ENCODE measurements at regions of chr6 and their contacts with region 1.

Region 1: GRCh38 chr6:111804627-111805235 is 68.5 kb downstream of the FYN start:
- DNase-seq: peak; percentile 70 to 90 (median 74)
- H3K4me3 ChIP-seq: peak overlapping the region in 1 of 2 donors; percentile 15
- H3K4me3 Mint-ChIP-seq: peak overlapping the region; percentile 34 to 86 (median 72)
- H3K27ac ChIP-seq: peak overlapping the region; percentile 77
- H3K27ac Mint-ChIP-seq: peak overlapping the region; percentile 94 to 99 (median 96)
- H3K4me1 ChIP-seq: peaks cover 98% of the 10 kb centered on the region
- H3K4me1 Mint-ChIP-seq: peaks cover 64 to 98% (median 84%) of the 10 kb centered on the region in 4 donors
- H3K27me3 ChIP-seq: no peaks in the 10 kb centered on the region
- H3K27me3 Mint-ChIP-seq: no peaks in the 10 kb centered on the region

Region 2: DNA sequence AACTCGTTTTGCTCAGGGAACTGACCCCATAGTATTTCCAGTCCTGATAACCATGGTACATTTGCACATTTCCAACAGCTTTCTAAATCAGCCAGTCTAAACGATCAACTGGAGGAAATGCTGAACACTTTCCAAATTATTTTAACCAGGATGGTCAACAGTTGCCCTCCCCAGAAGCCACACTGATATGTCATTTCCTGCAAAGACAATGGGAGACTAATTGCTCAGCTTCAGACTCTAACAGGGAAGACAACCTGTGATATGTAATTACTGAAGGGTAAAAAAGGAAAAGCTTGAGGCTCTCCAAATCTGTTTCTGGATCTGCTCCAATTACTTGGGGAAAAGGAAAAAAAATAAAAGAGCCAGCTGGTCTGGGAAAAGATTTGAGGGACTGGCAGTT is 20.3 kb before region 1 on chr6:
- CTCF ChIA-PET with region 1: interaction called, 12 read pairs
- POLR2A ChIA-PET with region 1: interaction called, 6 read pairs
- intact Hi-C with region 1: no loop called
- DNase-seq: no peak
- H3K4me3 ChIP-seq: no peak overlapping the region
- H3K4me3 Mint-ChIP-seq: peak overlapping the region in 3 of 8 donors; percentile 6 to 14 (median 12)
- H3K27ac ChIP-seq: peak overlapping the region; percentile 7
- H3K27ac Mint-ChIP-seq: peak overlapping the region in 6 of 7 donors; percentile 25 to 80 (median 73)
- H3K4me1 ChIP-seq: peaks cover 80% of the 10 kb centered on the region
- H3K4me1 Mint-ChIP-seq: peaks cover 54 to 77% (median 64%) of the 10 kb centered on the region in 4 donors
- H3K27me3 ChIP-seq: no peaks in the 10 kb centered on the region
- H3K27me3 Mint-ChIP-seq: no peaks in the 10 kb centered on the region

Region 3: DNA sequence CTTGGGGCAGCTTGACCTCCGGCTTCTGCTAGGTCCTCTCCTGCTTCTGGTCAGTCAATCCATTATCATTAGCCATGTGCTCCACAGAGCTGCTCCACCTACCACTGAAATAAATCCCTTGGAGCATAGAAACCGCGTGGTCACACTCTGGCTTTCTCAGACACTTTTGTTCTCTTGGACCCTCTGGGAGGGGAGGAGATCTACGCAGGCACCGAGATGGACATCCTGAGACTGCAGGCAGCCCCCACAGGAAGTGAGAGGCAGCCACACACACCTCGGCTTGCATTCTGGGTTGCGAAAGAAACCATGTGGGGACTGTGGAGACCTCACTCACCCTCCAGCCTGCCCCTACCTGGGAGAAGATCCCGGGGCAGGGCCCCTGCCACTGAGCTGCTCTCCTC is 11.0 kb before region 1 on chr6:
- CTCF ChIA-PET with region 1: interaction called, 11 read pairs
- POLR2A ChIA-PET with region 1: interaction called, 7 read pairs
- intact Hi-C with region 1: no loop called
- DNase-seq: peak; percentile 45 to 70 (median 49)
- H3K4me3 ChIP-seq: peak overlapping the region; percentile 42 to 52
- H3K4me3 Mint-ChIP-seq: peak overlapping the region; percentile 63 to 84 (median 81)
- H3K27ac ChIP-seq: peak overlapping the region; percentile 45
- H3K27ac Mint-ChIP-seq: peak overlapping the region in 6 of 7 donors; percentile 88 to 95 (median 92)
- H3K4me1 ChIP-seq: peaks cover 94% of the 10 kb centered on the region
- H3K4me1 Mint-ChIP-seq: peaks cover 6 to 63% (median 31%) of the 10 kb centered on the region in 4 donors
- H3K27me3 ChIP-seq: no peaks in the 10 kb centered on the region
- H3K27me3 Mint-ChIP-seq: no peaks in the 10 kb centered on the region

Region 4: DNA sequence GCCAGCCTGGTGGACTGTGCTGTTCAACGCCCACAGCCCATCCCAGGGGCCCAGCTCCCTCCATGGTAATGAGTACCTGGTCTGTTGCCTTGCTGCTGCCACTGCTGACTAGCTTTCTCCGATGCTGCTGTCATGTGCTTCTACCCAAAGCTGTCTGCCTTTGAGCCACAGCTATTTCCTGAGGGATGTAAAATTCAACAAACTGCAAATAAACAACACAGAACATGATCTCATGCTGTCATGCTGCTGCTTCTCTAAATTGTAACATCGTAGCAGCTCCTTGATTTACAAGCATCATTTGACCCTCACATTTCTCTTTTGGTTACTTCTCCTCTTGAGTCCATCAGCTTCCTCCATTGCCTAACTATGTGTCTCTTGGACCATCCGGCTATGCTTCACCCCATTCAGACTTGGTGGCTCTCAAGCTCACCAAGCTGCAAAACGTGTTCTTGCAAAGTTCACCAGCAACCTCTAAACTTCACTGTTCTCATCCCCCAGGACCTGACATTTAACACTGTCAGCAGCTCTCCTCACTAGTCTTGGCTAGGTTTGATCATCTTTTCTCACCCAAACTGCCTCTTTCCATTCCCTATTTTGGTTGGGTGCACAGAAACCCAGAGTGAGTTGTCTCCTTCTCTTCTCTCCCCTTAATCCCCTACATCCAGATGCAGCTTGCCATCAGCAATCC is 14.0 kb after region 1 on chr6:
- CTCF ChIA-PET with region 1: interaction called, 12 read pairs
- POLR2A ChIA-PET with region 1: interaction called, 14 read pairs
- intact Hi-C with region 1: no loop called
- DNase-seq: peak in 1 of 5 donors; percentile 60
- H3K4me3 ChIP-seq: no peak overlapping the region
- H3K4me3 Mint-ChIP-seq: peak overlapping the region in 7 of 8 donors; percentile 31 to 82 (median 69)
- H3K27ac ChIP-seq: no peak overlapping the region
- H3K27ac Mint-ChIP-seq: peak overlapping the region; percentile 36 to 88 (median 77)
- H3K4me1 ChIP-seq: peaks cover 79% of the 10 kb centered on the region
- H3K4me1 Mint-ChIP-seq: peaks cover 52 to 64% (median 58%) of the 10 kb centered on the region in 4 donors
- H3K27me3 ChIP-seq: no peaks in the 10 kb centered on the region
- H3K27me3 Mint-ChIP-seq: no peaks in the 10 kb centered on the region

Region 5: GRCh38 chr6:111823831-111824607 is 19.3 kb after region 1 on chr6:
- CTCF ChIA-PET with region 1: interaction called, 10 read pairs
- POLR2A ChIA-PET with region 1: interaction called, 14 read pairs
- intact Hi-C with region 1: no loop called
- DNase-seq: peak in 1 of 5 donors; percentile 73
- H3K4me3 ChIP-seq: no peak overlapping the region
- H3K4me3 Mint-ChIP-seq: peak overlapping the region; percentile 4 to 75 (median 58)
- H3K27ac ChIP-seq: peak overlapping the region; percentile 49
- H3K27ac Mint-ChIP-seq: peak overlapping the region; percentile 67 to 95 (median 87)
- H3K4me1 ChIP-seq: peaks cover 76% of the 10 kb centered on the region
- H3K4me1 Mint-ChIP-seq: peaks cover 64 to 82% (median 70%) of the 10 kb centered on the region in 4 donors
- H3K27me3 ChIP-seq: no peaks in the 10 kb centered on the region
- H3K27me3 Mint-ChIP-seq: no peaks in the 10 kb centered on the region

Region 6: GRCh38 chr6:111841822-111842221 is 37.1 kb after region 1 on chr6:
- CTCF ChIA-PET with region 1: interaction called, 9 read pairs
- POLR2A ChIA-PET with region 1: interaction called, 10 read pairs
- intact Hi-C with region 1: loop called (anchors 2 kb)
- DNase-seq: peak; percentile 65 to 69 (median 66)
- H3K4me3 ChIP-seq: peak overlapping the region in 1 of 2 donors; percentile 29
- H3K4me3 Mint-ChIP-seq: no peak overlapping the region
- H3K27ac ChIP-seq: peak overlapping the region; percentile 54
- H3K27ac Mint-ChIP-seq: no peak overlapping the region
- H3K4me1 ChIP-seq: peaks cover 100% of the 10 kb centered on the region
- H3K4me1 Mint-ChIP-seq: peaks cover 0 to 60% (median 29%) of the 10 kb centered on the region in 4 donors
- H3K27me3 ChIP-seq: no peaks in the 10 kb centered on the region
- H3K27me3 Mint-ChIP-seq: no peaks in the 10 kb centered on the region

Region 7: DNA sequence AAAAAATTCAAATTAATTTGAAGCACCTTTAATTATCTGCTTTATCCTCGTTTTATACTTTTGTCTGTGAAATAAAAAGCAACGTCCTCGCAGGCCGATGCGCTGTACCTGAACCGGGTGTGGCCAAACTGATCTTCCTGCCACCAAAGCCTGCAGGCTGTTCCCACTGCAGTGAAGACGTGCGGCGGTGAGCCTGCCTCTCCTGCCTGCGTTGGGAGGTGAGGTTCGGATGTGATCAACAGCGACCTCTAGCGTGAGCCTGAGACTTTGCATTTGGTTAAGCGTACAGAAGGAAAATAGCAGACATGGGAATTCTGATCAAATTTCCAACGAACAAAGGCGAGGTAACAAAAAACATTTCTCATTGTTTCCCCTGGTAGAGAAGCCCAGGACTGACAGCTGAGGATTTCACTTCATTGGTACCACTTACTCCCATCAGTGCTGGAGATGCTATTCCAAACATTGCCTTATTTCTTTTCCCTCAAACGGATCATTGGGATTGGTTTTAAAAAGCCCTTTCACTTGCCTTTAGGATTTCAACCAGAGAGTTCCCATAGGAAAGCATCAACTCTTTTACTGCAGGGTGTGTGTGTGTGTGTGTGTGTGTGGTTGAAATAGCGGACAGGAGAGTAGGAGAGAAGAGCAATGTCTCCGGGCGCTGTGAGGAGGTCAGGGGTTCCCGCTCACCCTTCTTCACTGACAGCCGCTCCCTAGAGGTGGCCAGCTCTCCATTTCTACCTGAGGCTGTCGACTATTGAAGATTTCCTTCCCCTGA is 192.5 kb after region 1 on chr6:
- CTCF ChIA-PET with region 1: interaction called, 14 read pairs
- POLR2A ChIA-PET with region 1: interaction called, 9 read pairs
- intact Hi-C with region 1: loop called (anchors 1 kb)
- DNase-seq: peak; percentile 76 to 79 (median 78)
- H3K4me3 ChIP-seq: peak overlapping the region in 1 of 2 donors; percentile 21
- H3K4me3 Mint-ChIP-seq: peak overlapping the region; percentile 64 to 85 (median 80)
- H3K27ac ChIP-seq: no peak overlapping the region
- H3K27ac Mint-ChIP-seq: peak overlapping the region; percentile 76 to 90 (median 85)
- H3K4me1 ChIP-seq: peaks cover 38% of the 10 kb centered on the region
- H3K4me1 Mint-ChIP-seq: peaks cover 39 to 47% (median 42%) of the 10 kb centered on the region in 4 donors
- H3K27me3 ChIP-seq: no peaks in the 10 kb centered on the region
- H3K27me3 Mint-ChIP-seq: no peaks in the 10 kb centered on the region